ENCODE measurements at regions of chr2 and their contacts with region 1.

Region 1: DNA sequence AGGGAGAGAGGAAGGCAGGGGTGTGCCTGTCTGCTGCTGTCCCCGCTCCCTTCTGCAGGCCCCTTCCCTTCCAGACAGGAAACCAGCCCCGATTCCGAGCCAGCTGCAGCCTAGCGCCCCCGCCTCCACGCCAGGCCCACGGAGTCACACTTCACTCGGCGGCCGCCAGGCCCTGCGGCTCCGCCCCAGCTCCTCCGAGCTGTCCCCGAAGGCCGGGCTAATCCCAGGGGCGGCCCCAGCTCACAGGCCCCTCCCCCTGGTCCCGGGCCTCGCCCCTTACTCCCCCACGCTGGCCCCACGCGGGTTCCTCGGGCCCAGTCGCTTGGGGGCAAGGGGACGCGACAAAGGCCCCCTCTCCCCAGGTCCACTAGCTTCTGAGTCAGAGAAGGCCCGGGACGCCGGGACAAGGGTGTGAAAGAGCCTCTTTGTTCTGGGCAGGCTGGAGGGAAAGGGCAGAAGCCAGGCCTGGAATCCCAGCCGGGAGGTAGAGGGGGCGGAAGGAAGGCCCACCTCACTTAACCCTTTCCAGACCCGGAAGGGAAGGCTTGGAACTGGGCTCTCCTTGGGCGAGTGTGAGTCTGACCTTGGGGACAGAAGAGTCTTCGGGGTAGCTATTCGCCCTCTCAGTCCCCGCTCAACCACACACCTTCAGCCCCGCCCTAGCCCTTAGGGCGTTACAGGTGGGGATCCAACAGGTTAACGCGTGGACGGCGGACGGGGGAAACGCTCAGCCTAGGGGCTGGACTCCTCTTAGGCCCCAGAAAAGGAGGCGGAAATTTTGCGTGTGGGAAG is 1.2 kb downstream of the RTKN start:
- DNase-seq: peak; percentile 81
- H3K4me3 ChIP-seq: peak overlapping the region; percentile 72 to 82 (median 73)
- H3K27ac ChIP-seq: peak overlapping the region; percentile 83
- H3K4me1 ChIP-seq: peaks cover 43% of the 10 kb centered on the region
- H3K27me3 ChIP-seq: no peaks in the 10 kb centered on the region
- CTCF ChIP-seq: peak; percentile 3 to 29

Region 2: DNA sequence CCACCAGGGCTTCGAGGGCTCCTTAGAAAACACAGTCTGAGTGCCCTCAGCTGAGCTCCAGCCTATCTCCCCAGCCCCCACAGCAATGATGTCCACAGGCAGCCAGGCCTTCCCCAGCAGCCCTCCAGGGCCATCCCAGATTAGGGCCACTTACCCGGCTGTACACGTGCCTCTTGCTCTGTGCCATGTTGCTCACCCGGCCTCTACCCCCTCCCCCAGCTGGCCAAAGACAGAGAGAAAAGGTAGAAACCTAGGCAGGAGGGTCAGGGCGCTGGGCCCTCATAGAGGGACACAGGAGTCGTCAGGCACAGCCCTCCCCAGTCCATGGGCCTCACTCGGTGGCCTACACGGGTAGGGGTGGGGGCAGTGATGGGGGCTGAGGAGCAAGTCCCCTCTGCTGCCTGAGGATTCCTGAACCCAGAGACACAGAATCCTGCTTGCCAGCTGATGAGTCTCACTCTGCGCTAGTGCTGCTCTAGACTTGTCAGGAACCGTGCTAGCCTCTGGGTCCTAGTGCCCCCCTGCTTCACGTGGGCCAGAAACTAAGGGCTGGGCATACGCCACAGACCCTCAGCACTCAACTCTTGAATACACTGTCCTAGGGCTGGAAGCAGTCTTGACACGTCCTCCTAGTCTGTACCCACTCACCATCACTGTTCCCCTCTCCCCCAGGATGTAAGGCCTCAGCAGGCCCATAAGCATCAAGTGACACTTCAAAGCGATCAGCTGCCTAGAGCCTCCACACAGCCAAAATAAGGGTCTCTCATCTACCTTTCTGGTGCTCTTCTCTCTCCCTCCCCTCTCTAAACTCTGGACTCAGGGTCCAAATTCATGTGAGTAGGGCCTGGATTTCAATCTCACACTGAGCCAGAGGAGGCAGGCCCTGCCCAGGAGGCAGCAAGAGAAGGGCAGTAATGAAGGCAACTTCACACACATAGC is 60.5 kb before region 1 on chr2 and contains the start of gene DCTN1:
- CTCF ChIA-PET with region 1: no interaction called
- dilution Hi-C with region 1: no loop called
- in situ Hi-C with region 1: no loop called
- intact Hi-C with region 1: no loop called
- DNase-seq: peak; percentile 50
- H3K4me3 ChIP-seq: peak within 1 kb of the TSS; percentile 15 to 44 (median 39)
- H3K27ac ChIP-seq: peak within 1 kb of the TSS; percentile 9
- H3K4me1 ChIP-seq: peaks cover 24% of the 10 kb centered on the region
- H3K27me3 ChIP-seq: no peaks in the 10 kb centered on the region
- CTCF ChIP-seq: no peak
- total RNA-seq, gene DCTN1: 137 to 172 TPM

Region 3: DNA sequence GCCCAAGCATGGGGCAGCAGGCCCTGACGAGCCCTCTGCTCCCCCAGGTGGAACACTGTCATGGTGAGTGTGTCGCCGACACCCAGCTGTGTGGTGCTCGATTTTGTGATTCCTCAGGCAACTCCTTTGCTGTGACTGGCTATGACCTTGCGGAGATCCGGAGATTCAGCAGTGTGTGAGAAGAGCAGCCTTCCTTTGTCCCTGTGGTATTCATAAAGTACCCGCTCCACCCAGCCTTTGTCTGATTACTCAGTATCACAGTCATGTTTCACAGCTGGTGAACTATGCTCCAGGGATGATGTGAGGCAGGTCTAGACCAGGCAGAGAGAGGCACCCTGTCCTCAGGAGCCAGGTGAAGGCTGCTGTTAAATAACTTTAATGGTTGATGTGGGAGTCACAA is 15.1 kb before region 1 on chr2:
- CTCF ChIA-PET with region 1: no interaction called
- dilution Hi-C with region 1: no loop called
- in situ Hi-C with region 1: no loop called
- intact Hi-C with region 1: loop called (anchors 1 kb)
- DNase-seq: peak; percentile 99
- H3K4me3 ChIP-seq: no peak overlapping the region
- H3K27ac ChIP-seq: peak overlapping the region; percentile 89
- H3K4me1 ChIP-seq: peaks cover 67% of the 10 kb centered on the region
- H3K27me3 ChIP-seq: no peaks in the 10 kb centered on the region
- CTCF ChIP-seq: no peak

Region 4: GRCh38 chr2:74515981-74516633 is 75.5 kb after region 1 on chr2:
- CTCF ChIA-PET with region 1: no interaction called
- dilution Hi-C with region 1: no loop called
- in situ Hi-C with region 1: no loop called
- intact Hi-C with region 1: no loop called
- DNase-seq: no peak
- H3K4me3 ChIP-seq: no peak overlapping the region
- H3K27ac ChIP-seq: no peak overlapping the region
- H3K4me1 ChIP-seq: peaks cover 19% of the 10 kb centered on the region
- H3K27me3 ChIP-seq: peaks cover 30% of the 10 kb centered on the region
- CTCF ChIP-seq: no peak

Region 5: DNA sequence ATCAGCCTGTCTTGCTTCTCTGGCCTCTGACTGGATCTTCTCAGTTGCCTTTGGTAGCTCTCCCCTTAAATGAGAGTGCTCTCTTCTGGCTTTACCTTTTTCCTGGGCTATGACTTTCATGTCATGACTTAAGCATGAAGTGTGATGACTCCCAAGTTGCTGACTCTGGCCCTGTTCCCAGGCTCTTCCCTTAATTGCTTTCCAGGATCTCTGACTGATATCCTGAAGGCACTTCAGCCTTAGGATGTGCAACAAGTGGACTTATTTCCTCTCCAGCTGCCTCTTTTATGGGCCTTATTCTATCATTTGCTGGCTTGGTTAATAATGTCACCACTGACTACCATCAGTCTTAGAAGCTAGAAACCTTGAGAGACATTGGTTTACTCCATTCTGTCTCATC is 230.9 kb after region 1 on chr2:
- CTCF ChIA-PET with region 1: no interaction called
- dilution Hi-C with region 1: no loop called
- in situ Hi-C with region 1: no loop called
- intact Hi-C with region 1: no loop called
- DNase-seq: peak; percentile 63
- H3K4me3 ChIP-seq: no peak overlapping the region
- H3K27ac ChIP-seq: no peak overlapping the region
- H3K4me1 ChIP-seq: peaks cover 4% of the 10 kb centered on the region
- H3K27me3 ChIP-seq: no peaks in the 10 kb centered on the region
- CTCF ChIP-seq: no peak